ENCODE measurements at regions of chr9 and their contacts with region 1.

Region 1: GRCh38 chr9:134449221-134449894 is 123.1 kb downstream of the RXRA start:
- DNase-seq: peak; percentile 87
- H3K4me3 Mint-ChIP-seq: no peak overlapping the region
- H3K27ac Mint-ChIP-seq: no peak overlapping the region
- H3K4me1 Mint-ChIP-seq: peaks cover 3% of the 10 kb centered on the region
- H3K27me3 Mint-ChIP-seq: no peaks in the 10 kb centered on the region

Region 2: GRCh38 chr9:134602547-134603309 is 153.4 kb after region 1 on chr9:
- CTCF ChIA-PET with region 1: no interaction called
- intact Hi-C with region 1: no loop called
- DNase-seq: no peak
- H3K4me3 Mint-ChIP-seq: no peak overlapping the region
- H3K27ac Mint-ChIP-seq: no peak overlapping the region
- H3K4me1 Mint-ChIP-seq: no peaks in the 10 kb centered on the region
- H3K27me3 Mint-ChIP-seq: peaks cover 10% of the 10 kb centered on the region

Region 3: GRCh38 chr9:134641173-134641985 is 192.0 kb after region 1 on chr9 and contains the start of gene COL5A1:
- CTCF ChIA-PET with region 1: interaction called, 3 read pairs
- intact Hi-C with region 1: loop called (anchors 5 kb)
- DNase-seq: peak; percentile 37
- H3K4me3 Mint-ChIP-seq: peak within 1 kb of the TSS; percentile 18
- H3K27ac Mint-ChIP-seq: no peak within 1 kb of the TSS
- H3K4me1 Mint-ChIP-seq: no peaks in the 10 kb centered on the region
- H3K27me3 Mint-ChIP-seq: peaks cover 15% of the 10 kb centered on the region
- total RNA-seq, gene COL5A1: 0.10 TPM in 1 of 2 experiments, not detected in the other

Region 4: GRCh38 chr9:134656334-134657006 is 207.1 kb after region 1 on chr9:
- CTCF ChIA-PET with region 1: no interaction called
- intact Hi-C with region 1: loop called (anchors 1 kb)
- DNase-seq: no peak
- H3K4me3 Mint-ChIP-seq: no peak overlapping the region
- H3K27ac Mint-ChIP-seq: no peak overlapping the region
- H3K4me1 Mint-ChIP-seq: no peaks in the 10 kb centered on the region
- H3K27me3 Mint-ChIP-seq: no peaks in the 10 kb centered on the region

Region 5: GRCh38 chr9:134738869-134739659 is 289.7 kb after region 1 on chr9:
- CTCF ChIA-PET with region 1: interaction called, 4 read pairs
- intact Hi-C with region 1: loop called (anchors 1 kb)
- DNase-seq: peak; percentile 41
- H3K4me3 Mint-ChIP-seq: no peak overlapping the region
- H3K27ac Mint-ChIP-seq: no peak overlapping the region
- H3K4me1 Mint-ChIP-seq: no peaks in the 10 kb centered on the region
- H3K27me3 Mint-ChIP-seq: no peaks in the 10 kb centered on the region

Region 6: DNA sequence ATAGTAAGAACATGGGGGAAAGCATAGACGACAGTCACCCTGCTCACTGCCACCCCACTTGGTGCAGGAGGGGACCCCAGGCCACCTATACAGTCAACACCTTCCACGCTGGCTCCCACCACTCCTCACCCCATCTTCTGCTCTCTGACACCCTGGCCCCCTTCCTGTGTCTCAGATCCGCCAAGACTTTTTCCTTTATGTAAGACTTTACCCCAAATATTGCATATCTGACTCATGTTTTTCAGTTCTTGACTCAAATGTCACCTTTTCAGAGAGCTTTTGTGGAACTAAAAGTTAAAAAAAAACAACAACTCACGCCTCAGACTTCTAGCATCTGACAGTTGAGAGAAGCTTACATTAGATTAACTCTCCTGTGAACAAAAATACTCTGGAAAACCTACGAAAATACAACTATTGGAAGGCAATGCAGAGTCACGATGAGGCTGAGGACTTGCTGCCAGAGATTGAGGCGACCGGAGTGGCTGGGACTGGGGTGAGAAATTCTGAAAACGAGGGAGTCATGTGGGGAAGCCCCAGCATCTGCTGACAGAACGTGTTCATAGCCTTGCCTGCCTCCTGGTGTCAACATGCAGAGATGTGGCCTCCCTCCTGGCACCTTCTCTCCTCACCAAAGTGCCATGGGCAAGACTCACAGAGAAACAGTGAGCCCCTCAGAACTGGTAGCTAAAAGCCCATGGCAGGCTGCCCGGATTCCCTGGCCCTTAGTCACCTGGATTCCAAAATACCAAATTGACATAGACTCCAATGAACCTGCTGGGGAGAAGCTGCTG is 408.9 kb after region 1 on chr9:
- CTCF ChIA-PET with region 1: no interaction called
- intact Hi-C with region 1: loop called (anchors 1 kb)
- DNase-seq: peak; percentile 75
- H3K4me3 Mint-ChIP-seq: no peak overlapping the region
- H3K27ac Mint-ChIP-seq: peak overlapping the region; percentile 67
- H3K4me1 Mint-ChIP-seq: peaks cover 11% of the 10 kb centered on the region
- H3K27me3 Mint-ChIP-seq: peaks cover 19% of the 10 kb centered on the region

Measured in activated naive CD4-positive, alpha-beta T cell treated with anti-CD3 and anti-CD28 coated beads for 36 hours (primary cell).